A549 (cell line): ENCODE measurements at regions of chr17 and their contacts with region 1.

Region 1: DNA sequence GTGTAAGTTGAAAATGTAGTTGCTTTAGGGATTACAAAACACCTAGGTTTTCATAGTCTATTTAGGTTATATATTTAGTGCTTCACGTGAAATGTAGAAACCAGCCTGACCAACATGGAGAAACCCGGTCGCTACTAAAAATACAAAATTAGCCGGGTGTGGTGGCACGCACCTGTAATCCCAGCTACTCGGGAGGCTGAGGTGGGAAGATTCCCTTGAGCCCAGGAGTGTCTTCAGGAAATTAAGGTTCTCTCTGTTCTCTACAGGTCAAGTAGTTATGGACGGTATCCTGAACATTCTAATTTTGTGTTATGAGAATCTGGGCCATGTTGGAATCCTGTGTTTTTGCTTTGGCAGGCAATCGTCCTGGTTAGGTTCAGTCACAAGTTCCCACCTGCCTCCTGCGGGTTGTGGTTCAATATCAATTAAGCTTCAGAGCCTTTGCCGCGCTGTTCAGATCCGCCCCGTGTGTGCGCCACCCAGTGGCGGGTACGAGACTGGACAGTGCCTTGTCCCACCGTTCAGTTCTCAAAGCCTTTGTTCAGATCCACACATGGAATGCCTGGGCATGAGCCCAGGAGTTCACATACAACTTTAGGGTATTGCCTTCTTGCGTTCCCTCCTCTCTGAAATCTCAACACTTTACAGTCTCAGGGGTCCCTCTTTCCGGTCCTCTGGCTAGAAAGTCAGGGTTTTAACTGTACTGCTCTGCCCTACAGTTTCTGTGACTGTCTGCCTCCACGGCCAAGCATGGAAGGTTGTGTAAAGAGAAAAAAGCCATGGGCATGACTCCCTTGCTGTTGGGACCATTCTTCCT is 41.7 kb downstream of the HEATR6 start:
- DNase-seq: peak; percentile 81 to 84
- ATAC-seq: peak; percentile 87 to 94
- H3K4me3 ChIP-seq: no peak overlapping the region
- H3K27ac ChIP-seq: peak overlapping the region; percentile 11 to 59; a peak in 5 of 6 replicates
- H3K4me1 ChIP-seq: peaks cover 5% of the 10 kb centered on the region
- CTCF ChIP-seq: peak; percentile 96
- EP300 ChIP-seq: no peak
- POLR2A ChIP-seq: no peak
- RAD21 ChIP-seq: peak; percentile 66 to 69

Region 2: DNA sequence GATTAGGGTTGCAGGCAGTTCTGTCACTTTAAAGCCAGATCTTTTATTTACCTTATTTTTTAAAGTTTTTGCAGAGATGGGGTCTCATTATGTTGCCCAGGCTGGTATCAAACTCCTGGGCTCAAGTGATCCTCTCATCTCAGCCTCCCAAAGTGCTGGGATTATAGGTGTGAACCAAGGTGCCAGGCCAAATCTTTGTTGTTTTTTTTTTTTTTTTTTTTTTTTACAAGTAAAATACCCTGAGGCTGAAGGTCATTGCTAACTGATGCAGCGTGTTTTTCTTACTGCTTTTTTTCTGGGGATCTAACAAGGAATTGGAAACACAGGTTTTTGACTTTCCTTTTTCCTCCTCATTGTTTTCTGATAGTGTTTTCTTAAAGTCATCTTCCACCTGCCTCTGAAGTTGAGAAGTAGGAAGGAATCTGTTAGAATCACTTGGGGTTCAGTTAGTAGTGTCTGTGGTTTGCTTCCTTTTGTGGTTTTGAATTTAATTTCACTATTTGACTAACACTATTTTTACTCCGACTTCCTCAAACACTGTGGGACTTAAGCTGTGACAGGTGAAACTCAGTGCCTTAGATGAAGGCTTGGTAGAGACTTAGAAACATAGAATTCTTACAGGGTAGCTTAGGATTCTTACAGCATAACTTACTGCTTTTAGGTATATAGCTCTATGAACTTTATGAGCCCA is 395.1 kb before region 1 on chr17:
- CTCF ChIA-PET with region 1: no interaction called
- POLR2A ChIA-PET with region 1: no interaction called
- DNase-seq: no peak
- ATAC-seq: no peak
- H3K4me3 ChIP-seq: no peak overlapping the region
- H3K27ac ChIP-seq: no peak overlapping the region
- H3K4me1 ChIP-seq: peaks cover 39% of the 10 kb centered on the region
- CTCF ChIP-seq: no peak
- EP300 ChIP-seq: no peak
- POLR2A ChIP-seq: no peak
- RAD21 ChIP-seq: no peak

Region 3: GRCh38 chr17:60049936-60050335 is 12.9 kb after region 1 on chr17:
- CTCF ChIA-PET with region 1: interaction called, 50 read pairs
- POLR2A ChIA-PET with region 1: no interaction called
- DNase-seq: no peak
- ATAC-seq: 0 out of 6 replicates have a peak, but pooled peaks of 1 of the 2 experiments have one; percentile 37
- H3K4me3 ChIP-seq: no peak overlapping the region
- H3K27ac ChIP-seq: no peak overlapping the region
- H3K4me1 ChIP-seq: no peaks in the 10 kb centered on the region
- CTCF ChIP-seq: no peak
- EP300 ChIP-seq: no peak
- POLR2A ChIP-seq: no peak
- RAD21 ChIP-seq: no peak

Region 4: GRCh38 chr17:60102632-60103096 is 65.7 kb after region 1 on chr17:
- CTCF ChIA-PET with region 1: no interaction called
- POLR2A ChIA-PET with region 1: no interaction called
- DNase-seq: peak; percentile 35 to 41
- ATAC-seq: peak; percentile 75 to 86
- H3K4me3 ChIP-seq: peak overlapping the region; percentile 27
- H3K27ac ChIP-seq: peak overlapping the region; percentile 68 to 83
- H3K4me1 ChIP-seq: peaks cover 16% of the 10 kb centered on the region; the same call in 2 of the 3 replicates
- CTCF ChIP-seq: no peak
- EP300 ChIP-seq: no peak
- POLR2A ChIP-seq: no peak
- RAD21 ChIP-seq: no peak

Region 5: GRCh38 chr17:60135151-60135950 is 98.3 kb after region 1 on chr17:
- CTCF ChIA-PET with region 1: no interaction called
- POLR2A ChIA-PET with region 1: no interaction called
- DNase-seq: peak; percentile 93 to 99
- ATAC-seq: peak; percentile 87 to 96
- H3K4me3 ChIP-seq: peak overlapping the region; percentile 60
- H3K27ac ChIP-seq: peak overlapping the region; percentile 66 to 79
- H3K4me1 ChIP-seq: peaks cover 11% of the 10 kb centered on the region
- CTCF ChIP-seq: no peak
- EP300 ChIP-seq: no peak
- POLR2A ChIP-seq: peak; percentile 89
- RAD21 ChIP-seq: no peak